ENCODE measurements at regions of chr4 and their contacts with region 1.

Region 1: GRCh38 chr4:165327211-165328100 is at the start of gene MSMO1:
- DNase-seq: peak; percentile 97 to 99 (median 98)
- H3K4me3 ChIP-seq: peak within 1 kb of the TSS; percentile 74 to 96
- H3K4me3 Mint-ChIP-seq: no peak within 1 kb of the TSS
- H3K27ac ChIP-seq: peak within 1 kb of the TSS; percentile 74
- H3K27ac Mint-ChIP-seq: no peak within 1 kb of the TSS
- H3K4me1 ChIP-seq: peaks cover 51% of the 10 kb centered on the region
- H3K4me1 Mint-ChIP-seq: peaks cover 21 to 38% (median 28%) of the 10 kb centered on the region in 4 donors
- H3K27me3 ChIP-seq: no peaks in the 10 kb centered on the region
- H3K27me3 Mint-ChIP-seq: no peaks in the 10 kb centered on the region
- total RNA-seq, gene MSMO1: 24.4 to 24.8 TPM

Region 2: GRCh38 chr4:163494360-163495162 is 1832.9 kb before region 1 on chr4 and contains the start of gene TMA16:
- CTCF ChIA-PET with region 1: no interaction called
- POLR2A ChIA-PET with region 1: interaction called, 4 read pairs
- intact Hi-C with region 1: loop called (anchors 1 kb)
- DNase-seq: peak; percentile 79 to 85 (median 83)
- H3K4me3 ChIP-seq: peak within 1 kb of the TSS; percentile 77 to 98
- H3K4me3 Mint-ChIP-seq: peak within 1 kb of the TSS; percentile 91 to 98 (median 96)
- H3K27ac ChIP-seq: peak within 1 kb of the TSS; percentile 75
- H3K27ac Mint-ChIP-seq: peak within 1 kb of the TSS; percentile 90 to 99 (median 96)
- H3K4me1 ChIP-seq: peaks cover 33% of the 10 kb centered on the region
- H3K4me1 Mint-ChIP-seq: peaks cover 20 to 40% (median 33%) of the 10 kb centered on the region in 4 donors
- H3K27me3 ChIP-seq: no peaks in the 10 kb centered on the region
- H3K27me3 Mint-ChIP-seq: peaks cover 1 to 4% of the 10 kb centered on the region in 2 donors
- total RNA-seq, gene TMA16: 24.6 to 25.0 TPM

Region 3: DNA sequence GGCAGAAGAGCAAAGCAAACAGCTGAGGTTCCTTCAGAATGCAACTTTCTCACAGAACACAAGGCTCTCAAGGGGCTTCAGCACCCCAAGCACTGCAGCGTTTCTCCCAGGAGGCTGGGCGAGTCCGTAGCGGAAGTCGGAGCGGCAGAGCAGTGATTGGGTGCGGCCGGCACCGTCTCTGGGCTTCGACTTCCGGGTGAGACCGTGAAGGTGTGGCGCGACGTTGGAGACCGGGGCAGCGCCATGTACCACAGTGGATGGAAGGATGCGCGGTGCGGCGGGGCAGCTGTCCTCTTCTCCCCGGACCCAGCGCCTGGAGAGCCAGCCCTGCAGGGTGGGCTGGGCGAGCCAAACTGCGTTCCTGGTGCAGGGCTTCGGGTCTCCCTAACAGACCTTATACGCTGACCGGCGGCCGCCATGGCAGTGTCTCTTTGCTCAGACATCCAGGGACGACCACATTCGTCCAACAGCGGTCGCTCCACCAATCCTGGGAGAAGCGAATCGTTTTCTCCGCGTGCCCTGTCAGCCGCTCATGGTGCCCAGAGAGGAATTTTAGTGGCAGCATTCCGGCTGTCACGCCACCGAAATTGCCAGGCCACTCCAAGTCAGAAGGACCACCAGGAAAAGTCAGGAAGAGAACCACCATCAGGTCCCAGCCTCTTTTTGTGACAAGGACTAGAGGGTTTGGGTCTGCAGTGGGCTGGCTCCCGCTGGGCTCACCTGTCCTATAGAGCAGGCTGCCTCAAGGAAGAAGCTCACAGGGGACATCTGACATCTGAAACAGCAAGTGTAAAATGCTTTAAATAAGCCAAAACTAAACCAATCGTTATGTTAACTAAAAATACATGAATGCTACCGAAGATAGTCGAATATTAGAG is 370.5 kb before region 1 on chr4:
- CTCF ChIA-PET with region 1: no interaction called
- POLR2A ChIA-PET with region 1: no interaction called
- intact Hi-C with region 1: loop called (anchors 5 kb)
- DNase-seq: peak; percentile 54 to 70 (median 66)
- H3K4me3 ChIP-seq: peak overlapping the region; percentile 61 to 72
- H3K4me3 Mint-ChIP-seq: peak overlapping the region; percentile 85 to 93 (median 89)
- H3K27ac ChIP-seq: no peak overlapping the region
- H3K27ac Mint-ChIP-seq: peak overlapping the region in 6 of 7 donors; percentile 6 to 78 (median 48)
- H3K4me1 ChIP-seq: peaks cover 11% of the 10 kb centered on the region
- H3K4me1 Mint-ChIP-seq: peaks cover 5 to 25% (median 15%) of the 10 kb centered on the region in 4 donors
- H3K27me3 ChIP-seq: no peaks in the 10 kb centered on the region
- H3K27me3 Mint-ChIP-seq: peaks cover 5 to 6% of the 10 kb centered on the region in 2 donors

Region 4: GRCh38 chr4:165207431-165208220 is 119.8 kb before region 1 on chr4 and contains the start of gene KLHL2:
- CTCF ChIA-PET with region 1: interaction called, 4 read pairs
- POLR2A ChIA-PET with region 1: interaction called, 9 read pairs
- intact Hi-C with region 1: loop called (anchors 1 kb)
- DNase-seq: peak; percentile 66 to 76 (median 66)
- H3K4me3 ChIP-seq: peak within 1 kb of the TSS; percentile 49 to 89
- H3K4me3 Mint-ChIP-seq: peak within 1 kb of the TSS; percentile 94 to 98 (median 96)
- H3K27ac ChIP-seq: peak within 1 kb of the TSS; percentile 50
- H3K27ac Mint-ChIP-seq: peak within 1 kb of the TSS; percentile 86 to 97 (median 93)
- H3K4me1 ChIP-seq: peaks cover 38% of the 10 kb centered on the region
- H3K4me1 Mint-ChIP-seq: peaks cover 42 to 64% (median 50%) of the 10 kb centered on the region in 4 donors
- H3K27me3 ChIP-seq: no peaks in the 10 kb centered on the region
- H3K27me3 Mint-ChIP-seq: no peaks in the 10 kb centered on the region
- total RNA-seq, gene KLHL2: 18.4 to 19.3 TPM

Region 5: DNA sequence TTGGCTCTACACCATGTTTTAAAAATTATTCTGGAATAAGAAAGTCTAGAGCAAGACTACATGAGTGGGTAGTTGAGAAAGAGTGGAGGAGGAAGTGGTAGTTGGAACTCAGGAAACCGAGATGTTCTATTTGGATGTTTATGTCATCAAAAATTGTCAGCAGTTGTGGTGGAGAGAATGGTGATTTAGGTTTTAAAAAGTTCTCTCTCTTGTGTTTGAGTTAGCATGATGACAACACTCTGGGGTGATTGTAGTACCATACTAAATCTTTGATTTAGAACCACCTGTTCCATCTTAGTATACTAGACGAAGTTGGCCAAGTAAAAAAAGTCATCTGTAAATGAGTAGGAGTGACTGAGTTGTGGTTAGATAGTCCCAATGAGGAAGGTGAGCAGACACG is 79.4 kb before region 1 on chr4:
- CTCF ChIA-PET with region 1: no interaction called
- POLR2A ChIA-PET with region 1: no interaction called
- intact Hi-C with region 1: loop called (anchors 10 kb)
- DNase-seq: peak in 1 of 5 donors; percentile 4
- H3K4me3 ChIP-seq: no peak overlapping the region
- H3K4me3 Mint-ChIP-seq: no peak overlapping the region
- H3K27ac ChIP-seq: no peak overlapping the region
- H3K27ac Mint-ChIP-seq: no peak overlapping the region
- H3K4me1 ChIP-seq: peaks cover 8% of the 10 kb centered on the region
- H3K4me1 Mint-ChIP-seq: peaks cover 0 to 8% (median 0%) of the 10 kb centered on the region in 4 donors
- H3K27me3 ChIP-seq: no peaks in the 10 kb centered on the region
- H3K27me3 Mint-ChIP-seq: no peaks in the 10 kb centered on the region

Region 6: GRCh38 chr4:166143227-166143626 is 815.8 kb after region 1 on chr4:
- CTCF ChIA-PET with region 1: no interaction called
- POLR2A ChIA-PET with region 1: no interaction called
- intact Hi-C with region 1: no loop called
- DNase-seq: peak in 2 of 5 donors; percentile 8 to 20
- H3K4me3 ChIP-seq: no peak overlapping the region
- H3K4me3 Mint-ChIP-seq: no peak overlapping the region
- H3K27ac ChIP-seq: no peak overlapping the region
- H3K27ac Mint-ChIP-seq: no peak overlapping the region
- H3K4me1 ChIP-seq: no peaks in the 10 kb centered on the region
- H3K4me1 Mint-ChIP-seq: no peaks in the 10 kb centered on the region
- H3K27me3 ChIP-seq: no peaks in the 10 kb centered on the region
- H3K27me3 Mint-ChIP-seq: peaks cover 0 to 1% of the 10 kb centered on the region in 2 donors

Measured in CD4-positive, alpha-beta memory T cell (primary cell).